ENCODE measurements at regions of chr11 and their contacts with region 1.

Region 1: DNA sequence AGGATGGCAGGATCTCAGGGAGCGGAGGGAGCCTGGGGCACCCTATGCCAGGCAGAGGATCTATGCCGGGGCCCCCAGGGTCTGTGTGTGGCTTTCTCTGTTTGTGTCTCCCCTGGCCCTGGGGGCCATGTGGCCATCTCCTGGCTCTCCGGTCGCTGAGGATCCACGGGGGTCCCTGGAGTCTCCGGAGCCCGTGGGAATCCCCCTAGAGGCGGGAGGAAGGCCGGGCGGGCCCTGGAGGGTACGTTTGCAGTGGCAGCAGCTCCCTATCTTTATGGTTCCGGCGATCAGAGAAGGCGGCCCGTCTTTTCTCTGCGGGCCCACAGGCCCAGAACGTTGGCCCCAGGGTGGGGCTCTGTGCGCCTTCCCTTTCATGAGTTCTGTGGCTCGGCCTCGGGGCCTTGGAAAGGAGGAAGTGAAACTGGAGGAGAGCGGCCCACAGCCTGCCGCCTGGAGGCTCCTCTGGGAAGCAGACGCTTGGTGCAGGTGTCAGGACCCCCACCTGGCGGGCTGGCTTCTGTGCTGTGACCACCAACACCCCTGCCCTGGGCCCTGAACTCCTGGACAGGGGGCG is 82.1 kb downstream of the KCNQ1 start:
- DNase-seq: no peak
- H3K4me3 ChIP-seq: no peak overlapping the region
- H3K27ac ChIP-seq: no peak overlapping the region
- H3K4me1 ChIP-seq: no peaks in the 10 kb centered on the region
- H3K27me3 ChIP-seq: no peaks in the 10 kb centered on the region
- CTCF ChIP-seq: no peak
- POLR2A ChIP-seq: no peak

Region 2: GRCh38 chr11:1486114-1486825 is 1040.6 kb before region 1 on chr11 and contains the start of gene MOB2:
- intact Hi-C with region 1: no loop called
- DNase-seq: no peak
- H3K4me3 ChIP-seq: peak within 1 kb of the TSS; percentile 35 to 45
- H3K27ac ChIP-seq: peak within 1 kb of the TSS; percentile 53
- H3K4me1 ChIP-seq: peaks cover 65% of the 10 kb centered on the region
- H3K27me3 ChIP-seq: no peaks in the 10 kb centered on the region
- CTCF ChIP-seq: no peak
- POLR2A ChIP-seq: no peak
- total RNA-seq, gene MOB2: 34.1 TPM

Region 3: GRCh38 chr11:2027708-2028107 is 499.2 kb before region 1 on chr11:
- intact Hi-C with region 1: no loop called
- DNase-seq: no peak
- H3K4me3 ChIP-seq: no peak overlapping the region
- H3K27ac ChIP-seq: no peak overlapping the region
- H3K4me1 ChIP-seq: no peaks in the 10 kb centered on the region
- H3K27me3 ChIP-seq: no peaks in the 10 kb centered on the region
- CTCF ChIP-seq: no peak
- POLR2A ChIP-seq: no peak

Region 4: GRCh38 chr11:2077061-2077802 is 449.7 kb before region 1 on chr11:
- intact Hi-C with region 1: no loop called
- DNase-seq: no peak
- H3K4me3 ChIP-seq: no peak overlapping the region
- H3K27ac ChIP-seq: no peak overlapping the region
- H3K4me1 ChIP-seq: no peaks in the 10 kb centered on the region
- H3K27me3 ChIP-seq: no peaks in the 10 kb centered on the region
- CTCF ChIP-seq: no peak
- POLR2A ChIP-seq: no peak

Region 5: GRCh38 chr11:2428322-2428795 is 98.5 kb before region 1 on chr11:
- intact Hi-C with region 1: loop called (anchors 5 kb)
- DNase-seq: no peak
- H3K4me3 ChIP-seq: no peak overlapping the region
- H3K27ac ChIP-seq: no peak overlapping the region
- H3K4me1 ChIP-seq: no peaks in the 10 kb centered on the region
- H3K27me3 ChIP-seq: no peaks in the 10 kb centered on the region
- CTCF ChIP-seq: peak; percentile 57 to 77 (median 68)
- POLR2A ChIP-seq: no peak

Region 6: DNA sequence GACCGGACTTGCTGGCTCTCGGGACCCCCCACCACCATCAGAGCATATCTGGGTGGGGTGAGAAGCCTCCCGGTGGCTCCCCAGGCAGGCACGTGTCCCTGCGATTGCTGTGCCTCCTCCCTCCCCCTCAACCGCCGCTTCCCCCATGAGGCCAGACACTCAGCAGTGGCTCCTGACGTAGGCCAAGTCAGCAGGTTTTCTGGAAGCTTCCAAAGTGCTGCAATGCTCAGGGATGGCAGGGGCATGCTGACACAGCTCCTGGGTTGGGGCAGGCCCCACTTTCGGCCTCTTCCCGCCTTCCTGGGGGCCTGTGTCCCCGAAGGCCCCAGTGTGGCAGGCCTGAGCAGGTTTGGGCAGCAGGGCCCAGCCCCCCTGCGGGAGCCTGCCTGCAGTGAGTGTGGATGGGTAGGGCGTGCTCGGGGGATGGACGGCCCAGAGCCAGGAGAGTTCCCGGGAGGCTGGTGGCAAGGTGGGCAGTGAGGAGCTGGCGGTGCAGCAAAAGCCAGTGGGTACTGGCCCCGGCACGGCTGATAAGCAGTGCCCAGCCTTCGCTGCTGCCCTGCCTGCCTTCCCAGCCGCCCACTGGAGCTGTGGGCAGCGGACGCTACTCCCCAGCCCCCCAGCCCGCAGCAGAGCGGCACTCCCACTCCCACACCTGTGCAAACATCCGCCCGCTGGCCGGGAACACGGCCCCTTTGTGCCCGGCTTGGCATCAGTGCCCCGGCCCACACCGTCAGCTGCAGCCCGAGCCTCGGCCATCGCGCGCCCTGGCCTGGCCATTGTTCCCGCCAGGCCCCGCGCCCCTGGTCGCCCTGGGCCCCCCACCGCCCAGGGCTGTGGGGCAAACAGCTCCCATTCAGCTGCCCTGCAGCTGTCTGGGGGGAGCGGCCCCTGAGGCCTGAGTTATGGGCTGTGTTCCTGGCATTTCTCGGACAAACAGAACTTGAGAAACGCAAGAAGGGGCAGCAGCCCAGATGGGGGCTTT is 47.9 kb after region 1 on chr11:
- intact Hi-C with region 1: no loop called
- DNase-seq: no peak
- H3K4me3 ChIP-seq: no peak overlapping the region
- H3K27ac ChIP-seq: no peak overlapping the region
- H3K4me1 ChIP-seq: no peaks in the 10 kb centered on the region
- H3K27me3 ChIP-seq: no peaks in the 10 kb centered on the region
- CTCF ChIP-seq: no peak
- POLR2A ChIP-seq: no peak